AG04449 (cell line): ENCODE measurements at regions of chr2 and their contacts with region 1.

Region 1: GRCh38 chr2:108637304-108637669 is 82.0 kb upstream of the RANBP2 start:
- DNase-seq: peak; percentile 68
- H3K4me3 ChIP-seq: no peak overlapping the region
- CTCF ChIP-seq: no peak

Region 2: GRCh38 chr2:108351889-108352288 is 285.4 kb before region 1 on chr2:
- CTCF ChIA-PET with region 1: interaction called, 11 read pairs
- POLR2A ChIA-PET with region 1: no interaction called
- DNase-seq: no peak
- H3K4me3 ChIP-seq: no peak overlapping the region
- CTCF ChIP-seq: no peak

Region 3: DNA sequence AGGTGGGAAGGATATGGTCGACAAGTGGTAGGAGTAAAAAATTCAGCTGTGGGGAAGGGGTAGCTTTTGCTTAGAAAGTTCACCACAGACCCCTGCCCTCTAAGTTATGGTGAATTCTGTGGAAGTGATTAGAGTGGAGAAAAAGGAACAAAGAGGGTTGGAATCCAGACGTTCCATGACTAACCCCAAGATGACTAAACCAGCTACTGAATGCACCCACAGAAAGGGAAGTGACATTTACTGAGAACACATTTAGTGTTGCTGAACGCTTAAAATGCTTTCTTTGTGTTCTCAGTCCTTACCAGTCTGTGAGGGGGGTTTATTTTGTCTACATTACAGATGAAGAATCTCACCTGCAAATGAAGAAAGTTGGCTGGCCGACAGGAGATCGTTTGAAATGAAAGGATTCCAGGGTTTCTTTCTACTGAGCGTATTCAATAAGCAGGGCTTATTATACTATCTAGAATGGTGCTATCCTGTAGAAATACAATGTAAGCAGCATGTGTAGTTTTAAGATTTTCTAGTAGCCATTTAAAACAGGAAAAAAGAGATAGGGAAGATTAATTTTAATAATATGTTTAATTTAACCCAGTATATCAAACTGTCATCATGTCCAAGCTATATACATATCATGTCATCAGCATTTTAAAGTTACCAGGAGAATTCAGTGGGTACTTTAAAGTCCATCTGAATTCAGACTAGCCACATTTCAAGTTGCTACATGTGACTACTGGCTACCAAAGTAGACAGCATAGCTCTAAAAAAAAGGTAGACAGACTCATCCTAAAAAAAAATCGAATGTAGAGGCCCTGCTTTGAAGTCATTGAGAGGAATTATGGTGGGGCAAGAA is 42.9 kb before region 1 on chr2:
- CTCF ChIA-PET with region 1: interaction called, 20 read pairs
- POLR2A ChIA-PET with region 1: interaction called, 8 read pairs
- DNase-seq: peak; percentile 80
- H3K4me3 ChIP-seq: no peak overlapping the region
- CTCF ChIP-seq: no peak

Region 4: DNA sequence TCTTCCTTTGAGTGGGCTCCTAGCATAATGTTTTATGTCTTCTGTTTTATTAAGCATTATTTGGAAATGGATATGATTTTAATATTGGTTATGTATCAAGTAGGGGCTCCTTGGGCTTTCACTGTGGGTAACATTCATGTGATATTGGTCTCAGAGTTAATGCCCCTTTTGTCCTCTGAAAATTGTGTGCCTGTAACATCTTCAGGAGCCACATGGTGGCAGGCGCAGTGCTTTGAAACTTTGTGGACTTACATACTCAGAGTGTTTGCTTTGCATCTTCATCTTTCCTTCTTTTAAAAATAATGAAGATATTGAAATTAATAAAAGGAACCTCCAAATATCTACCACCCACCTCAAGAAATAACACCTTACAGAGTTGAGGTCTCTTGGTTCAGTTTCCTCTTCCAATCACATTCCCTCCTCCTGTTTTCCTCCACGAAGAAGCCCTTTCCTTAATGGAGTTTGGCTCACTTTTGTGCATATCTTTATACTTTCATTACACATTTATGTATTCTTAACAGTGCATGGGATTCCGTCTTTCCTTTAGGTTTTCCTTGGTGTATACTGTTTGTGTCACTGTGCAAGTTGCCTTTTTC is 29.5 kb before region 1 on chr2:
- CTCF ChIA-PET with region 1: interaction called, 93 read pairs
- POLR2A ChIA-PET with region 1: no interaction called
- DNase-seq: no peak
- H3K4me3 ChIP-seq: no peak overlapping the region
- CTCF ChIP-seq: peak; percentile 66

Region 5: GRCh38 chr2:108621087-108621559 is 16.2 kb before region 1 on chr2:
- CTCF ChIA-PET with region 1: interaction called, 100 read pairs
- POLR2A ChIA-PET with region 1: no interaction called
- DNase-seq: no peak
- H3K4me3 ChIP-seq: no peak overlapping the region
- CTCF ChIP-seq: no peak

Region 6: DNA sequence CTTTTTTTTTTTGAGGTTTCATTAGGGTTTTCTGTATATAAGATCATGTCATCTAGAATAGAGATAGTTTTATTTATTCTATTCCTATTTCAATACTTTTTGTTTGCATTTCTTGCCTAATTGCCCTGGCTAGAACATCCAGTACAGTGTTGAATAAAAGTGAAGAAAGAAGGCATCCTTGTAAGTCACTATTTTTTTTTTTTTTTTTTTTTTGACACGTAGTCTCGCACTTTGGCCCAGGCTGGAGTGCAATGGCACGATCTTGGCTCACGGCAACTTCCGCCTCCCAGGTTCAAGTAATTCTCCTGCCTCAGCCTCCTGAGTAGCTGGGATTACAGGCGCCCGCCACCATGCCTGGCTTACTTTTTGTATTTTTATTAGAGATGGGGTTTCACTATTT is 54.2 kb after region 1 on chr2:
- CTCF ChIA-PET with region 1: no interaction called
- POLR2A ChIA-PET with region 1: no interaction called
- DNase-seq: no peak
- H3K4me3 ChIP-seq: no peak overlapping the region
- CTCF ChIP-seq: no peak

Region 7: DNA sequence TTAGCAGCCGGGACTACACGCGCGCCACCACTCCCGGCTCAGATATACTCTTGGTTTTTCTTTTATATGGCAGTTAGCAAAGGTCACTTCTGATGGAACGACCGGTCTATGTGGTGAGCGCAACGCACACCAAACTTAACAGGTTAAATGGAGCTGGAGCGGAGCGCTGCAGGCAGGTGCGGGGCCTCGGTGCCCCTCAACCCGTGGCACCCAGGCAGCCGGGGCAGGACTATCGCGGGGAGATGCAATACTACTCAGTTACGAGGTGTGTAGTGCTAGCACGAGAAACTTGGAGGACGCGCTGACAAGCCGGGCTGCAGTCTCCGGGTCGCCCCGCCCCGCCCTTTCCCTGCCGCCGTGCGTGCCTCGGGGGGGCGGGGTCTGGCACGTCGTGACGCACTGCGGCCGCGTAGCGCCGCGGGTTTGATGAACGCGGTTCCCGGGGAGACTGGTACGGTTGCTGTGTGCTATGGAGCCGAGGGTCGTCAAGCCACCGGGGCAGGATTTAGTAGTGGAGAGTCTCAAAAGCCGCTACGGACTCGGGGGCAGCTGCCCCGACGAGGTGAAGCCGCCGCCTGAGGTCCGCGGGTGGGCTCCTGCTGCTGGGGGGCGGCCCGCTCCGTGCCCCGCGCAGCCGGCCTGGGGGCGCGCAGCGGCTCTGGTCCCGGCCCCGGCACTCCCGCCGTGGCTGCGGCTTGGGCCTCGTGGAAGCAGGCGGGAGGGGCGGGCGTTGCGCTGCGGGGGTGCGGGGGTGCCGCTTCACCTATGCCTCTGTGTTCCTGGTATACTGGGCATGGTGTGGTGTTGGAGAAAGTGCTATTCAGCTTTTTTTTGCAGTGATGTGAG is 149.3 kb after region 1 on chr2 and contains the start of gene CCDC138:
- CTCF ChIA-PET with region 1: no interaction called
- POLR2A ChIA-PET with region 1: no interaction called
- DNase-seq: peak; percentile 5
- H3K4me3 ChIP-seq: peak within 1 kb of the TSS; percentile 78
- CTCF ChIP-seq: no peak